A549 (cell line): ENCODE measurements at regions of chr22 and their contacts with region 1.

Region 1: DNA sequence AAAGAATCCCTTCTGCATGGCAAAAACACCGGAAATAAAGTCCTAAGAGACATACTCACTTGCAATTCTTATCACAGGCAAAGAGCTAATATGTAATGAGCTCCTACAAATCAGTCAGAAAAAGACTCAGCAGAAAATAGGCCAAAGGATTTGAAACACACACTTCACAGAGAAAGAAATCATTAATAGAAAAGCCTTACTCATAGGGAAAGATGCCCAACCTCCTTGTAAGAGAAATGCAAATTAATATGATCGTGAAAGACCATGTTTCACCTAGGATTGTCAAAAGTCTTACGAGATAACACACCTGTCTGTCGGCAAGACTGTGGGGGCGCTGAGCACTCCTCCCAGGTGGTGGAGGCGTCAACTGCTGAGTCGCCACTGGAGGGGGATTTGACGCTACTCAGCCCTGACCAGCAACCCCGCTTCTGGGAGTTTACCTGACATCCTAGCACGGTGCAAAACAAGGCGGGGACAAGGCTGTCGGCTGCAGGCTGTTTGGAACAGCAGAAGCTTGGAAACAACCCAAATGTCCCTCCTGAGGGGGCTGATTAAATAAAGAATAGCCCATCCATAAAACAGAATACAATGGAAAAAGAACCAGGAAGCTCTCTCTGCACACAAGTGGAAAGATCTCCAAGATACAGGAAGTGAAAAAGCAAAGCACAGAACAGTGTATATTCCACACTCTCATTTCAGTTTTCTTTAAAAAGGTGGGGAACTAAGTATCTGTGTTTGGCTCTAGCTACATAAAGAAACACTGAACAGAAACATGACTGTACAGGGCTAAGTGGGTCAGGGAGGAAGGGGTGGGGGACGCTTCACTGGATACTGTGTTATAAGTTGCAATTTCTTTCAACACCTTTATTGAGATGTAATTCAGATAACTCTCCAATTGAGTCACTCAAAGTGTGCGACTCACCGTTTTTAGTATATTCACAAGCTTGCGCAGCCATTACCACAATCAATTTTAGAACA is 11.5 kb downstream of the CSNK1E start:
- DNase-seq: no peak
- ATAC-seq: peak; percentile 61 to 70; a peak in 5 of 6 replicates
- H3K4me3 ChIP-seq: no peak overlapping the region
- H3K27ac ChIP-seq: peak overlapping the region; percentile 3 to 74; a peak in 5 of 6 replicates
- H3K4me1 ChIP-seq: peaks cover 36% of the 10 kb centered on the region
- CTCF ChIP-seq: no peak
- EP300 ChIP-seq: no peak
- POLR2A ChIP-seq: no peak
- RAD21 ChIP-seq: no peak

Region 2: DNA sequence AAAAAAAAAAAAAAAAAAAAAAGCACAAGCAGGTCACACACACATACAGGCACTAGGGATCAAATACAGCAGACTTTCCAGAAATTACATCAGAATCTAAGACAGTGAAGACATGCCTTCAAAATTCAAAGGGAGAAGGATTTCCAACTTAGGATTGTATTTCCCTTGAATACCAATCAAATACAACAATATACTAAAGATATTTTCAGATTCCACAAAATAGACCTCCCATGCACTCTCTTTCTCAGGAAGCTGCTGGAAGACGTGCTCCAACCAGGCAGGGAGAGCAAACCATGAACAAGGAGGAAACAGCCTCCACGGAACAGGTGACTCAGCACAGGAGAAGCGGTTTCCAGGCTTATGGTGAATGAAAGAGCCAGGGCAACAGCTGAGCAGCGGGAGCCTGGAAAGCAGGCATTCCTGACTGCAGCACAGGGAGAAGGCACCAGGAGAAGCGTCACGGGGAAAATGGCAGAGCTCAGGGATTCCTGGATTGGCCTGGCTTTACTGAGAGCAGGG is 65.0 kb before region 1 on chr22:
- CTCF ChIA-PET with region 1: no interaction called
- POLR2A ChIA-PET with region 1: interaction called, 12 read pairs
- DNase-seq: peak; percentile 47 to 73
- ATAC-seq: peak; percentile 77 to 87
- H3K4me3 ChIP-seq: no peak overlapping the region
- H3K27ac ChIP-seq: peak overlapping the region; percentile 75 to 89
- H3K4me1 ChIP-seq: peaks cover 49% of the 10 kb centered on the region
- CTCF ChIP-seq: no peak
- EP300 ChIP-seq: no peak
- POLR2A ChIP-seq: no peak
- RAD21 ChIP-seq: no peak